K562 (cell line): ENCODE measurements at regions of chr16 and their contacts with region 1.

Region 1: DNA sequence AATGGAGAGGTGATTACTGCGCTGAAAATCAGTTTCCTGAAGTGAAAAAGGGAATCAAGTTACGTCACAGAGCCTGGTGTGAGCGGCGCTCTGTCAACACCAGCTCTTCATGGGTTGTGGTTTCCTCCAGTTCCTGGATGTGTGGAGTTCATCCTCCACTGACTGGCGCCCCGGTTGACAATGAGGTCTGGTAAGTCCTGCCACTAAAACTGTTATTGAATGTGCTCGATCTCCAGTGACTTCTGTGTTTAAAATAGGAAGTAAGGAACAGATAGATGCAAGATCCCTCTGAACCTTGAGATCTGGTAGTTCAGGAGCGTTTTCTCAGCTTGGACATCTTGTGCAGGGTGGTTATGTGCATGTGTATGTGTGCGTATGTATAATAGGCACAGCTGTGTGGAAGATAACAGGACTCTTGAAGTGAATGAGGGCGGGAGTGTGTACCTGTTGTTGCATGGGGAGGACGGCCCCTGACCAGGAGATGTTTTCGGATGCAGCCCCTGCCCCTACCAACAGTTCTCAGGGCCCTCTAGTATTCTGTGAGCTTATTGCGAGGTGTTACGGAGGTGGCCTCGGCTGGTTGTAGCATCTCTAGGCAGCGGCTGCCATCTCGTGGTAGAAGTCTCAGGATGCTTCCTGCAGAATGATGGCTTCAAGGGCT is 22.0 kb upstream of the GOT2 start:
- DNase-seq: peak; percentile 54 to 86 (median 64)
- ATAC-seq: peak; percentile 98
- H3K4me3 ChIP-seq: no peak overlapping the region
- H3K27ac ChIP-seq: no peak overlapping the region
- H3K4me1 ChIP-seq: peaks cover 0 to 6% of the 10 kb centered on the region in 2 experiments; a peak in 3 of 5 replicates
- H3K27me3 ChIP-seq: peaks cover 0 to 9% of the 10 kb centered on the region in 2 experiments; a peak in 3 of 5 replicates
- CTCF ChIP-seq: peak; percentile 80 to 89 (median 87)
- EP300 ChIP-seq: no peak
- POLR2A ChIP-seq: no peak
- RAD21 ChIP-seq: peak; percentile 79 to 88

Region 2: DNA sequence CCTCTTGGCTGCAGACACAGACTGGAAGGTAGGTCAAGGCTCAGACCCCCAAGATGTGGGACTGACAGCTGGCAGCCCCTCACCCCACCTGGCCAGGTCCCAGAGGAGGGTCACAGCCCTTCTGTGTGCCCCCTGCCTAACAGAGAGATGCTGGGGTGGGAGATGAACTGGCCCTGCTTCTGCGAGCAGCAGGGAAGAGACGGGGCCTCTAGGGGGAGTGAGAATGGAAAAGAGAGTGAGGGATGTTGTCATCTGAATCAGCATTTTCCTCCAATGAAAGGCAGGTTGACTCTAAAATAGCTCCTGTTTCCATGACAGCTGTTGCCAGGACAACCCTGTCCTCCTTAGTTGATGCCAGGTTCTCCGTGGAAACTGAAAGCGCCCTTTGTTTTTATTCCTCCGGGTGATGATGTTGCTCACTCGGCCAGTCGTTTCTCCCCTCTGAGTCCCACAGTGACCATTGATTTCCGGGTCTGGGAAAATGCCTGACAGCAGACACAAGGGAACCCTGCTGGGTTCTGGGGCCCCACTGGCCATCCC is 261.1 kb before region 1 on chr16:
- CTCF ChIA-PET with region 1: no interaction called
- POLR2A ChIA-PET with region 1: no interaction called
- in situ Hi-C with region 1: loop called (anchors 5 kb)
- intact Hi-C with region 1: loop called (anchors 5 kb)
- DNase-seq: peak; percentile 86 to 92 (median 90)
- ATAC-seq: peak; percentile 87
- H3K4me3 ChIP-seq: no peak overlapping the region
- H3K27ac ChIP-seq: no peak overlapping the region
- H3K4me1 ChIP-seq: peaks cover 3 to 38% of the 10 kb centered on the region in 2 experiments; a peak in 4 of 5 replicates
- H3K27me3 ChIP-seq: peaks cover 0 to 33% of the 10 kb centered on the region in 2 experiments; a peak in 3 of 5 replicates
- CTCF ChIP-seq: peak; percentile 54 to 79 (median 77)
- EP300 ChIP-seq: no peak
- POLR2A ChIP-seq: no peak
- RAD21 ChIP-seq: peak in 1 of 2 experiments; percentile 28; a peak in 1 of 4 replicates

Region 3: DNA sequence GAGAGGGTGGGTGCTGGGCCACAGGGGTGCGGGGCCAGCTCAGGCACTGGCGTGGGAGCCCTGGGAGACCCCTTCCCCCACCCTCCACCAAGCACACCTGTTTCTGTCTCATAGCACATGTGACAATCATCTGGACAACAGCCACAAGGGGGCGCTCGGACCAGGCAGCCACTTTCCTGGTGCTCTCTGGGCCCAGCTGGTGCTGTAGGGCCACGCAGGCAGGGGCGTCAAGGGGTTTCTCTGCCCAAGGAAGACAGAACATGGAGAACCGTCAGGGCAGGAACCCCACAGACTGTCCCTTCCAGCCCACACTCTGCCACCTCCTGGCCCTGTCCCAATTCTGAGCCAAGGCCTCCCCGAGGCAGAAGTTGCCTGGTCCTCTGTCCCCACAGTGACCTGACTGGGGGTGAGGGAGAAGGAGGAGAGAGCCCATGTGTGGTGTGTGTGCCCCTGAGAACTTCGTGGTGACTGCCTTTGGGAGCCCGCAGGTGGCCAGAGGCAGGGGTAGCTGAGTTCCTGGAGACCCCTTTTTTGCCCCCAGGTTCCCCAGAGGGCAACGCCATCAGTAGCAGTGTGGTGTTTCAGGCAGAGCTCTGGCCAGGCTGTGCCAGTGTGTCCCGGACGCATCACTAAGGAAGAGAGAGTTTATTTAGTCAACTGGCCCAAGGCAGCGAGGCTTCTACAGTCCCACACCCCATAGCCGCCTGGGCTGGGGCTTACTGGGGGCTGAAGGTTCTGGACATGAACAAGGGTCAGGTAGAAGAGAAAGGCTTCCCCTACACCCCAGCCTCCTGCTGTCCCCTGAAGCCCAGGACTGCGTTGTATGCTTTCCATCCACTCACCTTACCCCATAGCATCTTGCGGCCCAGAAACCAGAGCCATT is 243.9 kb before region 1 on chr16:
- CTCF ChIA-PET with region 1: interaction called, 4 read pairs
- POLR2A ChIA-PET with region 1: no interaction called
- in situ Hi-C with region 1: no loop called
- intact Hi-C with region 1: loop called (anchors 1 kb)
- DNase-seq: peak; percentile 58 to 89 (median 64)
- ATAC-seq: peak; percentile 64
- H3K4me3 ChIP-seq: no peak overlapping the region
- H3K27ac ChIP-seq: no peak overlapping the region
- H3K4me1 ChIP-seq: peaks cover 4 to 54% of the 10 kb centered on the region in 2 experiments; a peak in 4 of 5 replicates
- H3K27me3 ChIP-seq: no peaks in the 10 kb centered on the region
- CTCF ChIP-seq: peak; percentile 74 to 87 (median 86)
- EP300 ChIP-seq: no peak
- POLR2A ChIP-seq: no peak
- RAD21 ChIP-seq: peak; percentile 60 to 75

Region 4: GRCh38 chr16:58904291-58904690 is 148.2 kb after region 1 on chr16:
- CTCF ChIA-PET with region 1: no interaction called
- POLR2A ChIA-PET with region 1: no interaction called
- in situ Hi-C with region 1: no loop called
- intact Hi-C with region 1: no loop called
- DNase-seq: no peak
- ATAC-seq: no peak
- H3K4me3 ChIP-seq: no peak overlapping the region
- H3K27ac ChIP-seq: no peak overlapping the region
- H3K4me1 ChIP-seq: no peaks in the 10 kb centered on the region
- H3K27me3 ChIP-seq: no peaks in the 10 kb centered on the region; a peak in 2 of 5 replicates
- CTCF ChIP-seq: no peak
- EP300 ChIP-seq: no peak
- POLR2A ChIP-seq: no peak
- RAD21 ChIP-seq: no peak